ENCODE measurements at regions of chr9 and their contacts with region 1.

Region 1: GRCh38 chr9:94002316-94003140 is 47.4 kb upstream of the BARX1 start:
- H3K4me3 ChIP-seq: no peak overlapping the region
- H3K27ac ChIP-seq: no peak overlapping the region
- H3K4me1 ChIP-seq: no peaks in the 10 kb centered on the region
- CTCF ChIP-seq: peak; percentile 34

Region 2: GRCh38 chr9:93682232-93682968 is 320.1 kb before region 1 on chr9:
- CTCF ChIA-PET with region 1: interaction called, 75 read pairs
- POLR2A ChIA-PET with region 1: interaction called, 3 read pairs
- H3K4me3 ChIP-seq: no peak overlapping the region
- H3K27ac ChIP-seq: no peak overlapping the region
- H3K4me1 ChIP-seq: no peaks in the 10 kb centered on the region
- CTCF ChIP-seq: peak; percentile 49

Region 3: DNA sequence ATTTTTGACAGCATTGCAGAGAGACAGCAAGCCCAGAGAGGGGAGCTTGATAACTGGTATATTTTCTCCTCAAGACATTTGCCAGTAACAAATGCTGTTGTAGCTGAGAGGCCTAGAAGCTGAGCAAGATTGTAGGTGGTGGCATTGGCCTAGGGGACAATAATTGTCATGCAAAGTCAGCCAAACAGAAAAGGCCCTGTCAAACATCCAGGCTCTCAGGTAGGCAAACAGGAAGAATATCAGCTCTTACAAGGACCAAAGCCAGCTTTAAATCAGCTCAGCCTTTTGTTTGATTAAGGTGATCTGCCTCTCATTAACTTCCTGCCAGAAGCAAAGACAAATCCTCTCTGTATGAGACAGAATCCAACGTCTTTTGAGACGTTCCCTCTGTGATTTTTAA is 17.7 kb before region 1 on chr9:
- CTCF ChIA-PET with region 1: interaction called, 19 read pairs
- POLR2A ChIA-PET with region 1: no interaction called
- H3K4me3 ChIP-seq: no peak overlapping the region
- H3K27ac ChIP-seq: no peak overlapping the region
- H3K4me1 ChIP-seq: no peaks in the 10 kb centered on the region
- CTCF ChIP-seq: no peak

Region 4: GRCh38 chr9:93990448-93990847 is 12.1 kb before region 1 on chr9:
- CTCF ChIA-PET with region 1: interaction called, 19 read pairs
- POLR2A ChIA-PET with region 1: no interaction called
- H3K4me3 ChIP-seq: no peak overlapping the region
- H3K27ac ChIP-seq: no peak overlapping the region
- H3K4me1 ChIP-seq: no peaks in the 10 kb centered on the region
- CTCF ChIP-seq: no peak

Region 5: GRCh38 chr9:94213511-94214124 is 211.1 kb after region 1 on chr9:
- CTCF ChIA-PET with region 1: interaction called, 11 read pairs
- POLR2A ChIA-PET with region 1: no interaction called
- H3K4me3 ChIP-seq: no peak overlapping the region
- H3K27ac ChIP-seq: no peak overlapping the region
- H3K4me1 ChIP-seq: no peaks in the 10 kb centered on the region
- CTCF ChIP-seq: peak; percentile 39